Right ventricle myocardium superior (tissue), 1 donor: ENCODE measurements at regions of chr6 and their contacts with region 1.

Region 1: DNA sequence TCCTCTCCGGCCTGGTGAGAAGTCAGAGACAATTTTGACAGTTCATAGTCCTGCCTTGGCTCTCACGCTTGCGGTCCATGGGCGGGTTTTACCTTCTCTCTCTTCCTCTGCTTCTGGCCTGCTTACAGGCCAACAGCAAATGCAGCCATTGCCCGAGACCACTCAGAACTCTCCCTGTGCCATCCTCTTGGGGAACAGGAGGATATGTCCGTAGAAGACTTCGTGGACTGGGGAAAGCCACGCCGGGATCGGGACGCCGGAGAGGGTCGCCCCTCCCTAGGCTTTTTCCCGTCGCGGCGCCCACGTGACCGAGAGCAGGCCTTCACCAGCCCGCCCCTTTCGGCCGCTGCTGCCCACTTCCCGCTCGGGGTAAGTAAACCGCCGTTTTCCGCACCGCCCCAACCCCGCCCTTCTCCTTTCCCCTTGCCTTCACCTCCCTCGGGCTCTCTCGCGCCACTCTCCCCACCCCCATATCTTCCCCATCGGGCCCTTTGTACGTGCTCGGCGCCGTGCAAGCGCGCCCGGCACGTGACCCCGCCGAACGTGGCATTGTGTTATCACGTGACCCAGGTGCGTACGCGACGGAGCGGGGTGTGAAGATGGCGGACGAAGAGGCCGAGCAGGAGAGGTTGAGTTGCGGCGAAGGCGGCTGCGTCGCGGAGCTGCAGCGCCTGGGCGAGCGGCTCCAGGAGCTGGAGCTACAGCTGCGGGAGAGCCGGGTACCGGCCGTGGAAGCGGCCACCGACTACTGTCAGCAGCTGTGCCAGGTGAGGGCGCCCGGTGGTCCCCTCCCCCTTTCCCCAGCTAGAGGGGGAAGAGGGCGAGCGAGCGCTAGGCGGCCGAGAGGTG is at the start of gene ZNF292:
- DNase-seq: peak; percentile 98
- ATAC-seq: peak; percentile 89
- total RNA-seq, gene ZNF292: 29.4 TPM

Region 2: GRCh38 chr6:87241307-87241706 is 86.1 kb after region 1 on chr6:
- intact Hi-C with region 1: loop called (anchors 10 kb)
- DNase-seq: no peak
- ATAC-seq: no peak

Region 3: DNA sequence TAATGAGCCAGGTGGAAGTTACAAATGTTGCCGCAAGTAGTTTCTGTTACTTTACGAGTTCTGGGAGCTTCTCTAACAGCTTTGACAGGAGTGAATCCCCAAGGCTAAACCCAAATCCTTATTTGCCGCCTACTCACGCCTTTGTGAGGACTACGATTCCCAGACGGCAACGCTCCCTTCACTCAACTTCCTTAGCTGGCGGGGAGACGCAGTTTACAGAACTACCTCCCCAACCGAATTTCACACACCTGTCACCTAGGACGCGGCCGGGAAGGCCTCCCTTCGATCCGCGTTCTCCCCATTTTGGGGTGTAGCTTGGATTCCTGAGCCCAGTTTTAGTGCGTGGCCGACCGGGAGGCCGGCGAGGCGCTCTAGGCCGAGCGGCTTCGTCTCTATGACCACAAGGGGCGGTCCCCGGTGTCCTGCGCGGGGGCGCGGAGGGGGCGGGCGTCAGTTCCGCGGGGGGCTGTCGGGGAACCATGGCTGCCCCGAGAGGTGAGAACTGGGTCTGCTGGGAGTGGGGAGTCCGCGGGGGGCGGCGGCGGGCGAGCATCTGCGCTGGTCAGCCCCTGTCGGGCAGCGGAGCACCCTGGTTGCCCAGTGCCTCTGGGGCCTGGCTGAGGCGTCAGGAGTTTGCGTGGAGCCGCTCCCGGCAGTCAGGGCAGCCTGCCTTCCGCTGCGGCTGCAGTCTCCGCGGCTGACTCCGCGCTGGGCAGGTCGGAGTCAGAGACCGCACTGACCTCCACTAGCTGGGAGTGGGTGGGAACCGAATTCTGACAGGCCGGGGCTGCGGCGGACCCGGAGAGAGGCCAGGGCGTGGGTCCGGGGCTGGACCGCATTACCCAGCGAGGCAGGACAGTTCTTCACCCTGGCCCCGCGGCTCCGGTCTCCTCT is 317.6 kb after region 1 on chr6 and contains the start of gene SLC35A1:
- intact Hi-C with region 1: loop called (anchors 10 kb)
- DNase-seq: peak; percentile 92
- ATAC-seq: peak; percentile 100
- total RNA-seq, gene SLC35A1: 9.8 TPM